K562 (cell line): ENCODE measurements at regions of chr5 and their contacts with region 1.

Region 1: GRCh38 chr5:135222171-135222681 is 176.8 kb downstream of the MACROH2A1 start:
- DNase-seq: peak in 1 of 4 experiments; percentile 22
- ATAC-seq: no peak
- H3K4me3 ChIP-seq: no peak overlapping the region
- H3K27ac ChIP-seq: no peak overlapping the region
- H3K4me1 ChIP-seq: peaks cover 12 to 13% of the 10 kb centered on the region in 2 experiments; a peak in 4 of 5 replicates
- H3K27me3 ChIP-seq: no peaks in the 10 kb centered on the region
- CTCF ChIP-seq: no peak
- EP300 ChIP-seq: no peak
- POLR2A ChIP-seq: no peak
- RAD21 ChIP-seq: no peak

Region 2: DNA sequence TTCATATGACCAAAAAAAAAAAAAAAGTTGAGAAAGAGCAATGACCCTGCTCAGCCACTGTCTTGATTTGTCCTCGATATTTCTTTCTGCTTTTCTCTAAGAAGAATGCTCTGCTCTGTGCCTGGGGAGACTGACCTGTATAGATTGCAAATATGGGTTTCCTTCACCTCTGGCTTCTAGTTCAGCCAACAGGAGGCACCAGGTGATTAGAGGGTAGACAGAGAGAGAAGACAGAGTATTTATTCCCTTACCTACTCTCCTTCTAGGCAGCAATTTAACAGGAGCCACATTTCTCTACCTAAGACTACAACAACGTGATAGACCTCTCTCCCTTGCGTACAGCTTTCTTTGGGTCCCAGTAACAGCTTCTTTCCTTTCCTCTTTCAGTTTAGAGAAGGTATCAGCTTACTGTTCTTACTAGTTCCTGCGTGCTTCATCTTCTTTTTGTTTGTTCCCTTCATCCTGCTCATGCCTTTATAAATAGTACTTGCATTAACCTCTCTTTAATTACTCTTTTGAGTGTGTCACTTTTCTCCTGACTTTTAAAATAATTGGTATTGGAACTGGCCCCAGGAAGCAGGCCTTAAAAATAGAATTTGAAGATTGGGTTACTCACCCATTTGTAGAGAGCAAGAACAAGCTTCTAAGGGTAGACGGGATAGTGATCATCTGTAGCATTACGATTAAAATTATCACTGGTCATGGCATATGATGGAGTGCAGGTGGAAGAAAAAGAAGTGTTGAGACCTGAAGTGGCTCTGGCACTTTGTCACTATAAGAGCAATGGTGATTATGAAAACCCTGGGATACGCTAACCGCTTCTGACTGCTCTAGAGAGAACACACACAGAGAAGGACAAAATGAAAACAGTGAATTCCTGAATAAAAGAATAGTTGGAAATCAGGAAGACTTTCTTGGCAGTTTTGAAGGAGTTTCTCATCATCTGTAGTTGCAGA is 1448.7 kb before region 1 on chr5:
- CTCF ChIA-PET with region 1: no interaction called
- POLR2A ChIA-PET with region 1: no interaction called
- in situ Hi-C with region 1: no loop called
- intact Hi-C with region 1: no loop called
- DNase-seq: no peak
- ATAC-seq: no peak
- H3K4me3 ChIP-seq: no peak overlapping the region
- H3K27ac ChIP-seq: no peak overlapping the region
- H3K4me1 ChIP-seq: no peaks in the 10 kb centered on the region
- H3K27me3 ChIP-seq: peaks cover 0 to 2% of the 10 kb centered on the region in 2 experiments; a peak in 2 of 5 replicates
- CTCF ChIP-seq: no peak
- EP300 ChIP-seq: no peak
- POLR2A ChIP-seq: no peak
- RAD21 ChIP-seq: no peak

Region 3: GRCh38 chr5:135255461-135256178 is 33.4 kb after region 1 on chr5:
- CTCF ChIA-PET with region 1: no interaction called
- POLR2A ChIA-PET with region 1: no interaction called
- in situ Hi-C with region 1: no loop called
- intact Hi-C with region 1: no loop called
- DNase-seq: peak in 1 of 4 experiments; percentile 52
- ATAC-seq: peak; percentile 90
- H3K4me3 ChIP-seq: no peak overlapping the region
- H3K27ac ChIP-seq: no peak overlapping the region; the same call in 2 of the 3 replicates
- H3K4me1 ChIP-seq: peaks cover 5 to 14% of the 10 kb centered on the region in 2 experiments; a peak in 4 of 5 replicates
- H3K27me3 ChIP-seq: no peaks in the 10 kb centered on the region
- CTCF ChIP-seq: peak; percentile 15 to 41 (median 39); a peak in 3 of 6 replicates
- EP300 ChIP-seq: no peak
- POLR2A ChIP-seq: no peak
- RAD21 ChIP-seq: peak; percentile 11 to 60; a peak in 2 of 4 replicates

Region 4: DNA sequence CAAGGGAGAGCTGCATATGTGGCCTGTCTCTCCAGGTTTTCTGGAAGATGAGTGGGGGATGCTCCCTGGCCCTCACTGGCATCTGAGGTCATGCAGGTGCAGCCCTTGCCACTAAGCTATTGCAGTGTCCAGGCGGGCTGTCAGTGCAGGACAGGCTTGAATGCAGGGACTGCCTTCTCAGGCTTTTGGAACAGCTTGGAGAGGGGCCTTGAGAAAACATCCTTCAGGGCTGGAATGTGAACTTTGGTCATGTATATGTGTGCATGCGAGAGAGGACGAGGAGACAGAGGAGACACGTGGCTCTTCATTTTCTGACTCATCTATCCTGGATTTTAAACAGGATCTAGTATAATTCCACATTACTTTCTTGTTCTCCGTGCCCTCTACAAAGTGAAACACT is 86.5 kb after region 1 on chr5:
- CTCF ChIA-PET with region 1: no interaction called
- POLR2A ChIA-PET with region 1: interaction called, 3 read pairs
- in situ Hi-C with region 1: loop called (anchors 5 kb)
- intact Hi-C with region 1: no loop called
- DNase-seq: no peak
- ATAC-seq: no peak
- H3K4me3 ChIP-seq: no peak overlapping the region
- H3K27ac ChIP-seq: no peak overlapping the region
- H3K4me1 ChIP-seq: peaks cover 14 to 35% of the 10 kb centered on the region in 2 experiments
- H3K27me3 ChIP-seq: no peaks in the 10 kb centered on the region
- CTCF ChIP-seq: no peak
- EP300 ChIP-seq: no peak
- POLR2A ChIP-seq: no peak
- RAD21 ChIP-seq: no peak

Region 5: GRCh38 chr5:135417083-135417482 is 194.9 kb after region 1 on chr5:
- CTCF ChIA-PET with region 1: no interaction called
- POLR2A ChIA-PET with region 1: no interaction called
- in situ Hi-C with region 1: no loop called
- intact Hi-C with region 1: no loop called
- DNase-seq: no peak
- ATAC-seq: no peak
- H3K4me3 ChIP-seq: no peak overlapping the region
- H3K27ac ChIP-seq: no peak overlapping the region
- H3K4me1 ChIP-seq: no peaks in the 10 kb centered on the region
- H3K27me3 ChIP-seq: no peaks in the 10 kb centered on the region; a peak in 1 of 5 replicates
- CTCF ChIP-seq: no peak
- EP300 ChIP-seq: no peak
- POLR2A ChIP-seq: no peak
- RAD21 ChIP-seq: no peak

Region 6: GRCh38 chr5:135714126-135714894 is 492.1 kb after region 1 on chr5:
- CTCF ChIA-PET with region 1: no interaction called
- POLR2A ChIA-PET with region 1: no interaction called
- in situ Hi-C with region 1: no loop called
- intact Hi-C with region 1: no loop called
- DNase-seq: no peak
- ATAC-seq: no peak
- H3K4me3 ChIP-seq: no peak overlapping the region
- H3K27ac ChIP-seq: no peak overlapping the region
- H3K4me1 ChIP-seq: no peaks in the 10 kb centered on the region
- H3K27me3 ChIP-seq: peaks cover 6 to 43% of the 10 kb centered on the region in 2 experiments; a peak in 4 of 5 replicates
- CTCF ChIP-seq: no peak
- EP300 ChIP-seq: no peak
- POLR2A ChIP-seq: no peak
- RAD21 ChIP-seq: no peak